ENCODE measurements at regions of chr10 and their contacts with region 1.

Region 1: GRCh38 chr10:22518167-22518724 is 172.9 kb downstream of the SPAG6 start:
- DNase-seq: no peak
- ATAC-seq: no peak
- H3K4me3 ChIP-seq: no peak overlapping the region
- H3K27ac ChIP-seq: no peak overlapping the region
- H3K4me1 ChIP-seq: no peaks in the 10 kb centered on the region
- H3K27me3 ChIP-seq: no peaks in the 10 kb centered on the region

Region 2: DNA sequence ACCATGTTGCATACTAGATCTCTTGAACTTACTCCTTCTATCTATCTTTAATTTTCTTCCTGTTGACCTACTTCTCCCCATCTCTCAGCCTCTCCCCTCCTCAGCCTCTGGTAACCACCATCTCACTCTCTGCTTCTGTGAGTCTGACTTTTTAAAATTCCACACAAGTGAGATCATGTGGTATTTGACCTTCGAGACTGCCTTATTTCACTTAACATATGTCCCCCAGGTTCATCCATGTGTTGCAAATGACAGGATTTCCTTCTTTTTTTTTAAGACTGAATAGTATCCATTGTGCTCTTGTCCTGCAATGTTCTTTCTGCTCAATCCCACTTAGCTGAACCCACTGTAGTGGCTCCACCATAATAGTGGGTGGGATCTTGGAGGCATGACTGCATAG is 463.3 kb before region 1 on chr10:
- intact Hi-C with region 1: loop called in 1 of 2 experiments (anchors 5 kb)
- DNase-seq: no peak
- ATAC-seq: no peak
- H3K4me3 ChIP-seq: no peak overlapping the region
- H3K27ac ChIP-seq: no peak overlapping the region
- H3K4me1 ChIP-seq: no peaks in the 10 kb centered on the region
- H3K27me3 ChIP-seq: no peaks in the 10 kb centered on the region

Region 3: DNA sequence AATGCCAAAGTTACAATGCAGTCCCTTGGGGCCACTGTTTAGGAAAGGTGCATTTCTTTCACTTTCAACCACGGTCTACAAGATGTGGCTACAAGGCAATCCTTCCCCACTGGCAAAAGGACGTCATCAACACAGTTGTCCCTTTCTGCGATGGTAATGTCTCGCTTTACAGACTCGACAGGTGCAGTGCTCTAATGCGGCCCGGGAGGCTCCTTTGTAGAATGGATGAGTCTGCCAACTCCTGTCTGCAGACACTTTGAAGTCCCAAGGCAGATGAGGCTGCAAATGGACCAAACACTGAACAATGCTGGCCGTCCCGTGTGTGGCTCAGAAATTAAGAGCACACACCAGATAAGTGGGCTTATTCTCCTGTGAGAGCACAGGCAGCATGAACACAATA is 62.5 kb after region 1 on chr10:
- intact Hi-C with region 1: no loop called
- DNase-seq: no peak
- ATAC-seq: no peak
- H3K4me3 ChIP-seq: no peak overlapping the region
- H3K27ac ChIP-seq: no peak overlapping the region
- H3K4me1 ChIP-seq: no peaks in the 10 kb centered on the region
- H3K27me3 ChIP-seq: no peaks in the 10 kb centered on the region

Region 4: GRCh38 chr10:22620140-22620857 is 102.1 kb after region 1 on chr10:
- intact Hi-C with region 1: no loop called
- DNase-seq: peak; percentile 89 to 94
- ATAC-seq: peak; percentile 81
- H3K4me3 ChIP-seq: no peak overlapping the region
- H3K27ac ChIP-seq: peak overlapping the region; percentile 3 to 75
- H3K4me1 ChIP-seq: peaks cover 16 to 18% of the 10 kb centered on the region in 2 donors
- H3K27me3 ChIP-seq: no peaks in the 10 kb centered on the region

Measured in aorta (tissue), 5 donors.